CD4-positive, alpha-beta T cell (primary cell): ENCODE measurements at regions of chr18 and their contacts with region 1.

Region 1: GRCh38 chr18:74081966-74082741 is 65.5 kb downstream of the FBXO15 start:
- DNase-seq: peak; percentile 43 to 84 (median 62)
- ATAC-seq: peak; percentile 97
- H3K4me3 ChIP-seq: peak overlapping the region; percentile 38
- H3K4me3 Mint-ChIP-seq: peak overlapping the region; percentile 78
- H3K27ac ChIP-seq: peak overlapping the region; percentile 61 to 74
- H3K27ac Mint-ChIP-seq: peak overlapping the region; percentile 85
- H3K4me1 ChIP-seq: peaks cover 16% of the 10 kb centered on the region
- H3K4me1 Mint-ChIP-seq: peaks cover 22% of the 10 kb centered on the region
- H3K27me3 ChIP-seq: no peaks in the 10 kb centered on the region
- H3K27me3 Mint-ChIP-seq: no peaks in the 10 kb centered on the region
- CTCF ChIP-seq: peak; percentile 60

Region 2: GRCh38 chr18:73707035-73707434 is 375.1 kb before region 1 on chr18:
- CTCF ChIA-PET with region 1: no interaction called
- POLR2A ChIA-PET with region 1: no interaction called
- intact Hi-C with region 1: no loop called
- DNase-seq: no peak
- ATAC-seq: no peak
- H3K4me3 ChIP-seq: no peak overlapping the region
- H3K4me3 Mint-ChIP-seq: no peak overlapping the region
- H3K27ac ChIP-seq: no peak overlapping the region
- H3K27ac Mint-ChIP-seq: no peak overlapping the region
- H3K4me1 ChIP-seq: no peaks in the 10 kb centered on the region
- H3K4me1 Mint-ChIP-seq: no peaks in the 10 kb centered on the region
- H3K27me3 ChIP-seq: no peaks in the 10 kb centered on the region
- H3K27me3 Mint-ChIP-seq: no peaks in the 10 kb centered on the region
- CTCF ChIP-seq: no peak

Region 3: DNA sequence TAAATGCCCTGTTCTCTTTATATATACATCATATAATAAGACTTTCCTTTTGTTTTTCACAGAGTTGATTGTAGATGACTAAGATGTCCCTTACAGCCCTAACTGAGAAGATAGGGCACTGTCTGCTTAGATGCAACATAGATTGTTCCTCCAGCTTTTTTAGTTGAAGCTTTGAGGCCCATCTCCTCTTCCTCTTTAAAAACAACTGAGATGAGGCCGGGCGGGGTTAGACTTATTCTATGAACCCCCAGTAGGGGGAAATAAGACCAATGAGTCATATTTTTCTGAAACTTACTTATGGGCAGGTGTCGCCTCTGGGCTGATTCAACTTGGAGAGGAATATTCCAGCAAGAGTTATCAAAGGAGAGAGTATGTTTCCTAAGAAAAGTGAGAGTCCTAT is 19.1 kb before region 1 on chr18:
- CTCF ChIA-PET with region 1: no interaction called
- POLR2A ChIA-PET with region 1: interaction called, 30 read pairs
- intact Hi-C with region 1: no loop called
- DNase-seq: peak in 4 of 14 experiments; percentile 3 to 43 (median 29)
- ATAC-seq: no peak
- H3K4me3 ChIP-seq: no peak overlapping the region
- H3K4me3 Mint-ChIP-seq: no peak overlapping the region
- H3K27ac ChIP-seq: no peak overlapping the region
- H3K27ac Mint-ChIP-seq: peak overlapping the region; percentile 50
- H3K4me1 ChIP-seq: peaks cover 7% of the 10 kb centered on the region
- H3K4me1 Mint-ChIP-seq: peaks cover 23% of the 10 kb centered on the region
- H3K27me3 ChIP-seq: no peaks in the 10 kb centered on the region
- H3K27me3 Mint-ChIP-seq: no peaks in the 10 kb centered on the region
- CTCF ChIP-seq: no peak